CD4-positive, alpha-beta memory T cell (primary cell): ENCODE measurements at regions of chr5 and their contacts with region 1.

Region 1: GRCh38 chr5:132736853-132737833 is at the start of gene KIF3A:
- DNase-seq: peak; percentile 98
- H3K4me3 ChIP-seq: peak within 1 kb of the TSS; percentile 63 to 79
- H3K4me3 Mint-ChIP-seq: peak within 1 kb of the TSS; percentile 91 to 98 (median 94)
- H3K27ac ChIP-seq: peak within 1 kb of the TSS; percentile 68
- H3K27ac Mint-ChIP-seq: peak within 1 kb of the TSS; percentile 93 to 95 (median 94)
- H3K4me1 ChIP-seq: peaks cover 20% of the 10 kb centered on the region
- H3K4me1 Mint-ChIP-seq: peaks cover 28 to 31% (median 30%) of the 10 kb centered on the region in 4 donors
- H3K27me3 ChIP-seq: no peaks in the 10 kb centered on the region
- H3K27me3 Mint-ChIP-seq: no peaks in the 10 kb centered on the region
- total RNA-seq, gene KIF3A: 18.7 to 25.9 TPM

Region 2: GRCh38 chr5:132556763-132557477 is 180.2 kb before region 1 on chr5 and contains the start of gene RAD50:
- CTCF ChIA-PET with region 1: no interaction called
- POLR2A ChIA-PET with region 1: interaction called, 7 read pairs
- intact Hi-C with region 1: loop called (anchors 10 kb)
- DNase-seq: peak; percentile 88 to 92 (median 90)
- H3K4me3 ChIP-seq: peak within 1 kb of the TSS; percentile 43 to 64
- H3K4me3 Mint-ChIP-seq: peak within 1 kb of the TSS; percentile 93 to 99 (median 96)
- H3K27ac ChIP-seq: peak within 1 kb of the TSS; percentile 69
- H3K27ac Mint-ChIP-seq: peak within 1 kb of the TSS; percentile 94 to 98 (median 96)
- H3K4me1 ChIP-seq: peaks cover 46% of the 10 kb centered on the region
- H3K4me1 Mint-ChIP-seq: peaks cover 18 to 35% (median 26%) of the 10 kb centered on the region in 4 donors
- H3K27me3 ChIP-seq: no peaks in the 10 kb centered on the region
- H3K27me3 Mint-ChIP-seq: no peaks in the 10 kb centered on the region
- total RNA-seq, gene RAD50: 33.3 to 35.0 TPM

Region 3: GRCh38 chr5:132591145-132591544 is 146.0 kb before region 1 on chr5:
- CTCF ChIA-PET with region 1: no interaction called
- POLR2A ChIA-PET with region 1: no interaction called
- intact Hi-C with region 1: no loop called
- DNase-seq: no peak
- H3K4me3 ChIP-seq: no peak overlapping the region
- H3K4me3 Mint-ChIP-seq: no peak overlapping the region
- H3K27ac ChIP-seq: no peak overlapping the region
- H3K27ac Mint-ChIP-seq: no peak overlapping the region
- H3K4me1 ChIP-seq: no peaks in the 10 kb centered on the region
- H3K4me1 Mint-ChIP-seq: peaks cover 0 to 7% (median 0%) of the 10 kb centered on the region in 4 donors
- H3K27me3 ChIP-seq: no peaks in the 10 kb centered on the region
- H3K27me3 Mint-ChIP-seq: no peaks in the 10 kb centered on the region

Region 4: GRCh38 chr5:132777209-132778069 is 40.3 kb after region 1 on chr5 and contains the start of gene SEPTIN8:
- CTCF ChIA-PET with region 1: no interaction called
- POLR2A ChIA-PET with region 1: interaction called, 13 read pairs
- intact Hi-C with region 1: loop called (anchors 1 kb)
- DNase-seq: peak in 4 of 5 donors; percentile 38 to 51 (median 50)
- H3K4me3 ChIP-seq: peak within 1 kb of the TSS; percentile 69 to 70
- H3K4me3 Mint-ChIP-seq: peak within 1 kb of the TSS; percentile 78 to 89 (median 85)
- H3K27ac ChIP-seq: peak within 1 kb of the TSS; percentile 20
- H3K27ac Mint-ChIP-seq: peak within 1 kb of the TSS in 6 of 7 donors; percentile 33 to 89 (median 82)
- H3K4me1 ChIP-seq: peaks cover 35% of the 10 kb centered on the region
- H3K4me1 Mint-ChIP-seq: peaks cover 20 to 44% (median 28%) of the 10 kb centered on the region in 4 donors
- H3K27me3 ChIP-seq: no peaks in the 10 kb centered on the region
- H3K27me3 Mint-ChIP-seq: peaks cover 0 to 1% of the 10 kb centered on the region in 2 donors
- total RNA-seq, gene SEPTIN8: 12.6 to 13.8 TPM

Region 5: GRCh38 chr5:133051580-133052332 is 314.6 kb after region 1 on chr5 and contains the start of gene HSPA4:
- CTCF ChIA-PET with region 1: no interaction called
- POLR2A ChIA-PET with region 1: interaction called, 8 read pairs
- intact Hi-C with region 1: loop called (anchors 1 kb)
- DNase-seq: peak; percentile 97 to 99 (median 98)
- H3K4me3 ChIP-seq: peak within 1 kb of the TSS; percentile 97 to 99
- H3K4me3 Mint-ChIP-seq: peak within 1 kb of the TSS; percentile 96 to 99 (median 98)
- H3K27ac ChIP-seq: peak within 1 kb of the TSS; percentile 99
- H3K27ac Mint-ChIP-seq: peak within 1 kb of the TSS; percentile 99 to 100 (median 100)
- H3K4me1 ChIP-seq: peaks cover 54% of the 10 kb centered on the region
- H3K4me1 Mint-ChIP-seq: peaks cover 31 to 65% (median 49%) of the 10 kb centered on the region in 4 donors
- H3K27me3 ChIP-seq: no peaks in the 10 kb centered on the region
- H3K27me3 Mint-ChIP-seq: no peaks in the 10 kb centered on the region
- total RNA-seq, gene HSPA4: 55.9 to 58.1 TPM